Lower lobe of right lung (tissue), 2 donors: ENCODE measurements at regions of chr2 and their contacts with region 1.

Region 1: DNA sequence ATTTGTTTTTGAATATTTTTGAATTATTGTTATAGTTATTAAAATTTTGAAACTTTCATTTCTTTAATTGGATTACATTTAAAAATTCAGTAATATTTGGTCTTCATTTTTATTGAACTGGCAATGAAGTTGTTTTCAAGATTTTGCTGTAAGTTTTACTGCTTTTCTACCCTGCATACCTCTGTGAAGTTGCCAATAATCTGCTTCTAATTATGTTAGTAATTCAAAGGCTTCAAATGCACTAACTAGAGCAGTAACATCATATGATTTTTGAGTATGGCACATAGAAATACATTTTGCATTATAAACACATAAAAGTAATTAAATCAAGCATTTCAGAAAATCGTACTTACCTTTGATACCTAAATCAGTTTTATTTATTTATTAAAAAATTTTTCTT is 40.3 kb upstream of the FAM171B start:
- DNase-seq: no peak
- ATAC-seq: no peak
- H3K4me3 ChIP-seq: no peak overlapping the region
- H3K27ac ChIP-seq: no peak overlapping the region
- H3K4me1 ChIP-seq: no peaks in the 10 kb centered on the region
- H3K27me3 ChIP-seq: no peaks in the 10 kb centered on the region
- CTCF ChIP-seq: no peak

Region 2: GRCh38 chr2:186493564-186494085 is 159.9 kb before region 1 on chr2:
- intact Hi-C with region 1: no loop called
- DNase-seq: no peak
- ATAC-seq: no peak
- H3K4me3 ChIP-seq: no peak overlapping the region
- H3K27ac ChIP-seq: no peak overlapping the region
- H3K4me1 ChIP-seq: peaks cover 39% of the 10 kb centered on the region
- H3K27me3 ChIP-seq: no peaks in the 10 kb centered on the region
- CTCF ChIP-seq: no peak

Region 3: GRCh38 chr2:186503848-186504606 is 149.5 kb before region 1 on chr2:
- intact Hi-C with region 1: loop called (anchors 5 kb)
- DNase-seq: no peak
- ATAC-seq: no peak
- H3K4me3 ChIP-seq: no peak overlapping the region
- H3K27ac ChIP-seq: no peak overlapping the region
- H3K4me1 ChIP-seq: peaks cover 3% of the 10 kb centered on the region
- H3K27me3 ChIP-seq: no peaks in the 10 kb centered on the region
- CTCF ChIP-seq: peak; percentile 59